Left colon (tissue), 2 donors: ENCODE measurements at regions of chr1 and their contacts with region 1.

Region 1: DNA sequence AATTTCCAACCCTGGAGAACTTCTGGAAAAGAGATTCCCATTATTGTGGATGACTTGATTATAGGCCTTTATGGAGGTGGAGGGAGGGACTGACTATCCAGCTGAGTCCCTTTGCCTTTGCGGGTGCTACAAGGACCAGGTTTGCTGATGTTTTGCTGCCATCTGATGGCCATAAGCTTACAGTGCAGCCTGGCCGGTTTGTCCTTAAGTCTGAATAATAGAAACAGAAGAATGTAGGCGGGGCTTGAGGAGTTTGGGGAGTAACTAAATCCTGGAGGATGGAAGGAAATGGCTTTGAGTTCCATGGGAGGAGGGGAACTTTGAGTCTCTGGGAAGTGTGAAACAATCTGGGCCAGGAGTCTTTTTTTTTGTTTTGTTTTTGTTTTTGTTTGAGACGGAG is 55.7 kb upstream of the CD1D start:
- DNase-seq: peak; percentile 76 to 86
- ATAC-seq: peak; percentile 97

Region 2: DNA sequence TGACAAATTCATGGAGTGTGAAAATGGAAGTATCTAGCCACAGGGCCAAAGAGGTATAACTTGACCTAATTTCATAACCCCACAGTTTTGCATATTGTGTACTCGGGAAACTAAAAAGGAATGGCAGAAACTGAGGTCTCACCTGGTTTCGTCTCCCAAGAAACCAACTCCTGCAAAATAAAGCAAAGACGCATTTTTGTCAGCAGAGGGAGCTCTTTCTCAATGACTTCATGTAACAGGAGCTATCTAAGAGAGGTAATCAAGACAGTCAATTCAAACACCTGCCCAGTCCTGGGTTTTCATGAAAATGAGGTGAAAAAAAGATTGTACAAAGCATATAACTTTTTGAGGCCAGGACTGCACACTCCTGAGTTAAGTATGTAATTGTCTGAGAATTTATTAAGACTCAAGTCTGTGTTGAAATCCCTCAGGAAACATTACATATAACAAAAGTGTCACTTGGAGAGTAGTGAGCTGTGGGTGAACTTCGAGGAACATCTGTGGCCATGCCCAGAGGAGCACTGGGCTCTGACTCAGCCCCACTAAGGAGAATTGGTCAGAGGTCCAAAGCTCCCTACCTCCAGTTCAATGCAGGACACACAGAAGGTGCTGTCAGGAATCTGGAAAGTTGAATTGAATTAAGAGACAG is 544.7 kb before region 1 on chr1:
- intact Hi-C with region 1: loop called in 1 of 2 experiments (anchors 10 kb)
- DNase-seq: no peak
- ATAC-seq: peak; percentile 69

Region 3: DNA sequence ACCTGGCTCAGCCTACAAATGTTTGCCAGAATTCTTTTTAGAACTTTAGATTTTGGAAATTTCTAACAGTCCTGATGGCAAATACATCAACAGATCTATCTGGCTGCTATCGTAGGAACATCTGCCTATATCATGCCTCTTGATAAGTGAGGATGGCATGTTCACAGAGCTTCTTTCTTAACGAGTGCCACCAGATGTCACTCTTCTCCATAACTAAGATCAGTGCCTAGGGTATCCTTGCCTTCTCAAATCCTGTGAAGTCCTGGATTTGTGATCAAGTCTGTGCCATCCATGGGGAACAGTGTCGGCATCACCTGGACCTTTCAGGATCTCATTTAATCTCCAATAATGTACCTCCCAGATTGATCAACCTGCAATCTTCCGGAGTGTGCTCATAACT is 246.9 kb before region 1 on chr1:
- intact Hi-C with region 1: loop called in 1 of 2 experiments (anchors 10 kb)
- DNase-seq: no peak
- ATAC-seq: peak; percentile 68

Region 4: DNA sequence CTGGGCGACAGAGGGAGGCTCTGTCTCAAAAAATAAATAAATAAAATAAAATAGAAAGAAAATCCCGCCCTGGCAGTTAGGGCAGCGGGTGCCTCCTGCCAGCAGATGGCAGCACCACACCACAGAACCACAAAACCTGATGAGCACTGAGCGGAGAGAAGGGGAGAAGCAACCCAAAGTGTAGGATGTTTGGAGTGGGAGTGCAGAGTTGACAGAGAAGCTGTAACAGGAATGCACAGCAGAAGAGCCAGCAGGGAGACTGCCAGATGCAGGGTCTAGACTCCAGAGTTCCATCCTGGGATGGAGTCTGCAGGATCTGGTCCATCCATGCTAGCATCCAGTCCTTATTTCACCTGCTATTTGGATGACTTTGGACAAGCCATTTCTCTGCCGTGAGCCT is 161.3 kb before region 1 on chr1:
- intact Hi-C with region 1: no loop called
- DNase-seq: peak; percentile 48 to 72
- ATAC-seq: peak; percentile 51